H1 (cell line): ENCODE measurements at regions of chr6 and their contacts with region 1.

Region 1: GRCh38 chr6:30326526-30327260 is at the start of gene TRIM39:
- DNase-seq: peak in 1 of 2 experiments; percentile 89
- H3K4me3 ChIP-seq: peak within 1 kb of the TSS; percentile 67 to 83 (median 77)
- H3K27ac ChIP-seq: peak within 1 kb of the TSS; percentile 94
- H3K4me1 ChIP-seq: peaks cover 2 to 14% (median 9%) of the 10 kb centered on the region in 4 experiments
- H3K27me3 ChIP-seq: no peaks in the 10 kb centered on the region
- CTCF ChIP-seq: no peak
- EP300 ChIP-seq: peak in 1 of 2 experiments; percentile 29; a peak in 1 of 3 replicates
- POLR2A ChIP-seq: peak in 1 of 2 experiments; percentile 80; a peak in 2 of 3 replicates
- RAD21 ChIP-seq: no peak
- total RNA-seq, gene TRIM39: 24.2 and 26.1 TPM in 2 replicates

Region 2: GRCh38 chr6:30091577-30092381 is 234.9 kb before region 1 on chr6:
- CTCF ChIA-PET with region 1: no interaction called
- POLR2A ChIA-PET with region 1: no interaction called
- DNase-seq: no peak
- H3K4me3 ChIP-seq: no peak overlapping the region
- H3K27ac ChIP-seq: no peak overlapping the region
- H3K4me1 ChIP-seq: peaks cover 0 to 5% (median 0%) of the 10 kb centered on the region in 4 experiments; a peak in 2 of 7 replicates
- H3K27me3 ChIP-seq: peaks cover 0 to 11% (median 0%) of the 10 kb centered on the region in 4 experiments; a peak in 3 of 7 replicates
- CTCF ChIP-seq: no peak
- EP300 ChIP-seq: no peak
- POLR2A ChIP-seq: no peak
- RAD21 ChIP-seq: no peak

Region 3: GRCh38 chr6:30212865-30213666 is 113.6 kb before region 1 on chr6 and contains the start of gene TRIM26:
- CTCF ChIA-PET with region 1: interaction called, 5 read pairs
- POLR2A ChIA-PET with region 1: interaction called, 17 read pairs
- DNase-seq: peak; percentile 89 to 96
- H3K4me3 ChIP-seq: peak within 1 kb of the TSS; percentile 87 to 97 (median 94)
- H3K27ac ChIP-seq: peak within 1 kb of the TSS; percentile 95
- H3K4me1 ChIP-seq: peaks cover 2 to 10% (median 5%) of the 10 kb centered on the region in 4 experiments; a peak in 4 of 7 replicates
- H3K27me3 ChIP-seq: no peaks in the 10 kb centered on the region; a peak in 1 of 7 replicates
- CTCF ChIP-seq: no peak
- EP300 ChIP-seq: no peak
- POLR2A ChIP-seq: peak; percentile 56 to 96
- RAD21 ChIP-seq: no peak
- total RNA-seq, gene TRIM26: 30.7 and 32.3 TPM in 2 replicates

Region 4: DNA sequence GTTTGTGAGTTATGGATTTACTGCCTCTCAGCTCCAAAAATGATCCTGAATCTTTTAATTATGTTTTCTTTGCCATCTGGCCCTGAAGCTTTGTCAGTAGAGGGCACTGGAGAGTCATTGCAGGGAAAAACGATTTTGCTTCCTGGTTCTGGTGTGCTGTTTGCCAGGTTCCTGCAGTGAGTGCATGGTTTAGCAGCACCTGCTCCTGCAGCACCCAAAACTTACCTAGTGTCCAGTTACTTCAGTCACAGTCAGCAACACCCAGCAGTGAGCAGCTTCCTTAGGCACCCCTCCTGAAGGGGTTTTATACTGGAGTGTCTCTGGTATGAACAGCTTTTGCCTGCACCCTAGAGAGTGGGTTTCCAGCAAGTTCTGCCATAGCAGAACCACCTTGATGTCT is 107.4 kb before region 1 on chr6:
- CTCF ChIA-PET with region 1: interaction called, 5 read pairs
- POLR2A ChIA-PET with region 1: interaction called, 17 read pairs
- DNase-seq: peak in 1 of 2 experiments; percentile 59
- H3K4me3 ChIP-seq: no peak overlapping the region
- H3K27ac ChIP-seq: no peak overlapping the region
- H3K4me1 ChIP-seq: peaks cover 0 to under 1% (median 0%) of the 10 kb centered on the region in 4 experiments; a peak in 1 of 7 replicates
- H3K27me3 ChIP-seq: no peaks in the 10 kb centered on the region; a peak in 1 of 7 replicates
- CTCF ChIP-seq: peak; percentile 42 to 89 (median 76)
- EP300 ChIP-seq: no peak
- POLR2A ChIP-seq: no peak
- RAD21 ChIP-seq: peak; percentile 80 to 86

Region 5: DNA sequence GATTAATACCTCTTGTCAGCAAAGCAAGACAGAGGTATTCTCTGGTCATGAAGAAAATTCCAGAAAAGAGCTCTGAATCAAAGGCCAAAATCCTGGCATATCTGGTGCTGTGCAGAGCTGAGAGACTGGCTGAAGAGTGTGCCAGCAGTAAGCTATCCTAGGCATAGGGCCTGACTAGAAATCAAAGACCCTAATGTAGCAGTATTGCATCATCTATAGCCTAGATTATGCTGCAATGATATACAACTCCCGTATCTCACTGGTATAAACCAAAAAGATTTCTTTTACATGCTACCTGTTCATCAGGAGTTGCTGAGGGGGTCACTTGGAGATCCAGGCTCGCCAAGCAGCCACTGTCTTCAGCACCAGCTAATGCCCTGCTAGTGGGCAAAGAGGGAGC is 30.9 kb before region 1 on chr6:
- CTCF ChIA-PET with region 1: interaction called, 4 read pairs
- POLR2A ChIA-PET with region 1: interaction called, 13 read pairs
- DNase-seq: no peak
- H3K4me3 ChIP-seq: no peak overlapping the region
- H3K27ac ChIP-seq: no peak overlapping the region
- H3K4me1 ChIP-seq: no peaks in the 10 kb centered on the region
- H3K27me3 ChIP-seq: no peaks in the 10 kb centered on the region
- CTCF ChIP-seq: no peak
- EP300 ChIP-seq: no peak
- POLR2A ChIP-seq: no peak
- RAD21 ChIP-seq: no peak

Region 6: DNA sequence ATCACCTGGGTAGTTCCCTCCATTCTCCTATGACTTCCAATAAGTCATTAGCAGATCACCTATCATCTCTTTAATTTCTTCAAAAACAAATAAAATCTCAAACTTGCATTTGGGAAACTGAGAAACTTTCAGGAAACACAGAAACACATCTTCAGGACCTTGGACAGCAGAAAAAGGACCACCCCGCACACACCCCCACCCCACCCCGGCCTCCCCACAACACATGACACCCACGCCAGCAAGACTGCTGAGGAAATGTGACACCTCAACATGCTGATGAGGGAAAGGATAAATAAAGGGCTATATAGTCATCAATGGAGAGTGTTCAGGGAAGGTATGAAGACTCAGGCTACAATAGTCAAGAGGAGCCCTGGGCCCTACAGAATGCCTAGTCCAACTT is 15.6 kb before region 1 on chr6:
- CTCF ChIA-PET with region 1: interaction called, 6 read pairs
- POLR2A ChIA-PET with region 1: interaction called, 92 read pairs
- DNase-seq: no peak
- H3K4me3 ChIP-seq: no peak overlapping the region
- H3K27ac ChIP-seq: no peak overlapping the region
- H3K4me1 ChIP-seq: 0 out of 7 replicates have a peak, but pooled peaks cover 0 to 2% (median 0%) of the 10 kb centered on the region in 4 experiments
- H3K27me3 ChIP-seq: no peaks in the 10 kb centered on the region
- CTCF ChIP-seq: no peak
- EP300 ChIP-seq: no peak
- POLR2A ChIP-seq: no peak
- RAD21 ChIP-seq: no peak

Region 7: GRCh38 chr6:30344868-30345671 is 18.4 kb after region 1 on chr6 and contains the start of gene RPP21:
- CTCF ChIA-PET with region 1: interaction called, 5 read pairs
- POLR2A ChIA-PET with region 1: interaction called, 16 read pairs
- DNase-seq: peak in 1 of 2 experiments; percentile 93
- H3K4me3 ChIP-seq: peak within 1 kb of the TSS; percentile 79 to 92 (median 84)
- H3K27ac ChIP-seq: peak within 1 kb of the TSS; percentile 69; the same call in 1 of the 2 replicates
- H3K4me1 ChIP-seq: peaks cover 0 to 7% (median 0%) of the 10 kb centered on the region in 4 experiments; a peak in 1 of 7 replicates
- H3K27me3 ChIP-seq: no peaks in the 10 kb centered on the region
- CTCF ChIP-seq: no peak
- EP300 ChIP-seq: no peak
- POLR2A ChIP-seq: peak; percentile 89 to 95
- RAD21 ChIP-seq: no peak
- total RNA-seq, gene RPP21: 62.6 and 63.0 TPM in 2 replicates